SK-N-SH (cell line): ENCODE measurements at regions of chr10 and their contacts with region 1.

Region 1: GRCh38 chr10:69408318-69409175 is 8.2 kb downstream of the TACR2 start:
- DNase-seq: peak; percentile 98
- H3K4me3 ChIP-seq: peak overlapping the region; percentile 35 to 39; a peak in 3 of 4 replicates
- H3K27ac ChIP-seq: peak overlapping the region; percentile 46 to 50; a peak in 3 of 4 replicates
- H3K4me1 ChIP-seq: peaks cover 0 to 20% of the 10 kb centered on the region in 2 experiments; a peak in 2 of 4 replicates
- H3K27me3 ChIP-seq: no peaks in the 10 kb centered on the region
- CTCF ChIP-seq: peak; percentile 51
- EP300 ChIP-seq: no peak
- RAD21 ChIP-seq: peak; percentile 41; the same call in 1 of the 2 replicates

Region 2: DNA sequence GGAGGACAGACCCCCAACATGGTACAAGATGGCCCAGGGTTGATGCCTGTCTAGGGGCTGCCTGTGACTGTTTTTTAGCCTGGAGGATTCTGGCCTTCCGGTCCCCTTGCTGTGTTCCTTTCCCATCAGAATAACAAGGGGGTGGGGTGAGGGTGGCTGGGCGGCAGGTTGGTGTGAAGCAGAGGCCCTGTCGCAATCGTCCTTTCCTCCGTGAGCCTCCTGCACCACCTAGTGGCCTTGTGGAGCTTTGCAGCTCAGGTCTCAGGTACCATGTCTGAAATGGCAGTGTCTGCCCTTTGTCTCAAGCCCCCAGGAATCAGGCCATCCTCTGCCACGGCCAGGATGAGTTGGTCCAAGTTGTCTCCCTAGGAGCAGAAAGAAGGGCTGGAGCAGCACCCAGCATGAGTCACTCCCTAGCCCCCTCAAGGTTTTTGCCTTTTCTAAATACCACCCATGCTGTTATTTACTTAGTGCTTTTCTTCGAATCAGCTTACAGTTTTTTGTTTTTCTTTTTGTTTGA is 16.0 kb before region 1 on chr10:
- CTCF ChIA-PET with region 1: interaction called, 55 read pairs
- POLR2A ChIA-PET with region 1: no interaction called
- DNase-seq: peak; percentile 87
- H3K4me3 ChIP-seq: no peak overlapping the region; a peak in 1 of 4 replicates
- H3K27ac ChIP-seq: peak overlapping the region in 1 of 2 experiments; percentile 29; a peak in 1 of 4 replicates
- H3K4me1 ChIP-seq: peaks cover 8 to 11% of the 10 kb centered on the region in 2 experiments; a peak in 3 of 4 replicates
- H3K27me3 ChIP-seq: no peaks in the 10 kb centered on the region
- CTCF ChIP-seq: peak; percentile 94
- EP300 ChIP-seq: no peak
- RAD21 ChIP-seq: peak; percentile 98

Region 3: GRCh38 chr10:69451209-69451783 is 42.7 kb after region 1 on chr10 and contains the start of gene TSPAN15:
- CTCF ChIA-PET with region 1: interaction called, 28 read pairs
- POLR2A ChIA-PET with region 1: no interaction called
- DNase-seq: peak; percentile 96
- H3K4me3 ChIP-seq: peak within 1 kb of the TSS; percentile 67 to 74
- H3K27ac ChIP-seq: no peak within 1 kb of the TSS; a peak in 1 of 4 replicates
- H3K4me1 ChIP-seq: peaks cover 13 to 20% of the 10 kb centered on the region in 2 experiments; a peak in 2 of 4 replicates
- H3K27me3 ChIP-seq: no peaks in the 10 kb centered on the region
- CTCF ChIP-seq: no peak
- EP300 ChIP-seq: no peak
- RAD21 ChIP-seq: no peak
- polyA plus RNA-seq, gene TSPAN15: 8.5 and 13.8 TPM in 2 replicates

Region 4: GRCh38 chr10:69497606-69498390 is 89.3 kb after region 1 on chr10:
- CTCF ChIA-PET with region 1: interaction called, 12 read pairs
- POLR2A ChIA-PET with region 1: no interaction called
- DNase-seq: no peak
- H3K4me3 ChIP-seq: no peak overlapping the region
- H3K27ac ChIP-seq: no peak overlapping the region
- H3K4me1 ChIP-seq: peaks cover 0 to 4% of the 10 kb centered on the region in 2 experiments; a peak in 2 of 4 replicates
- H3K27me3 ChIP-seq: no peaks in the 10 kb centered on the region
- CTCF ChIP-seq: no peak
- EP300 ChIP-seq: no peak
- RAD21 ChIP-seq: no peak